ENCODE measurements at regions of chr2 and their contacts with region 1.

Region 1: DNA sequence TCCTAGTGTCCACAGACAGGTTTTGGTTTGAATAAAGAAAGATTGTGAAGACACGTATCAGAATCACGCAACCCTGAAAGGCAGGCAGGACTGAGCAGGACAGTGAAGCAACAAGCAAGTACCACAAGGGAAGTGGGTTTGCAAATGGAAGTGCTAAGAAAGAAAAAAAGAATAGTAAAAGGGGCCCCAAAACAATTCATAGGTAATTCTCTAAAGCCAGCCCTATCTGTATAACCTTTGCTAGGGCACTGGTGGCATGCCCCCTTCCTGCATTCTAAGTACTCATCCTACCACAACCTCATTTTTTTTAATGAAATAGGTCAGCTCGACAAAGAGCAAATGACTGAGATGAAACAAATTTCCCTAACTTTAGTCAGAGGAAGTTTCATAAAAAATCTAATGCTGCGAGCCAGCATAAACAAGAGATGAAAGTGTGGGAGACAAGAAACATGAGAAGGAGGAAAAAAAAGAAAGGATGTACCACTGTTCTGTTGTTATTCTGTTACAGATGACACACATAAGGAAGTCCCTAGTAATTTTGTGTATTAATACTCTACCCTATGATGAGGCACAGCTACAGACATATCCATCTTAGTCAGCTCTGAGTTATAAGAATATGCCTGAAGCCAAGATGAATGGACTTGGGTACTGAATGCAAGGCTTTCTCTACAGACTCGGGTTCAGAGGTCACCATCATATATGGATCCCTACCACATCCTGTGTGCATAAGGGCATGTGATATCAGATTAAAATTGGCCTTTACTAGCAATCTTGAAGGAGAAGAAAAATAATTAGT is 32.2 kb downstream of the IKZF2 start:
- DNase-seq: peak in 4 of 9 experiments; percentile 28 to 70 (median 57)
- ATAC-seq: peak; percentile 79
- H3K4me3 ChIP-seq: no peak overlapping the region
- H3K4me3 Mint-ChIP-seq: peak overlapping the region; percentile 53
- H3K27ac ChIP-seq: peak overlapping the region in 1 of 2 experiments; percentile 59
- H3K27ac Mint-ChIP-seq: peak overlapping the region; percentile 91
- H3K4me1 ChIP-seq: peaks cover 28% of the 10 kb centered on the region
- H3K4me1 Mint-ChIP-seq: peaks cover 65% of the 10 kb centered on the region
- H3K27me3 ChIP-seq: no peaks in the 10 kb centered on the region
- H3K27me3 Mint-ChIP-seq: no peaks in the 10 kb centered on the region
- CTCF ChIP-seq: no peak

Region 2: DNA sequence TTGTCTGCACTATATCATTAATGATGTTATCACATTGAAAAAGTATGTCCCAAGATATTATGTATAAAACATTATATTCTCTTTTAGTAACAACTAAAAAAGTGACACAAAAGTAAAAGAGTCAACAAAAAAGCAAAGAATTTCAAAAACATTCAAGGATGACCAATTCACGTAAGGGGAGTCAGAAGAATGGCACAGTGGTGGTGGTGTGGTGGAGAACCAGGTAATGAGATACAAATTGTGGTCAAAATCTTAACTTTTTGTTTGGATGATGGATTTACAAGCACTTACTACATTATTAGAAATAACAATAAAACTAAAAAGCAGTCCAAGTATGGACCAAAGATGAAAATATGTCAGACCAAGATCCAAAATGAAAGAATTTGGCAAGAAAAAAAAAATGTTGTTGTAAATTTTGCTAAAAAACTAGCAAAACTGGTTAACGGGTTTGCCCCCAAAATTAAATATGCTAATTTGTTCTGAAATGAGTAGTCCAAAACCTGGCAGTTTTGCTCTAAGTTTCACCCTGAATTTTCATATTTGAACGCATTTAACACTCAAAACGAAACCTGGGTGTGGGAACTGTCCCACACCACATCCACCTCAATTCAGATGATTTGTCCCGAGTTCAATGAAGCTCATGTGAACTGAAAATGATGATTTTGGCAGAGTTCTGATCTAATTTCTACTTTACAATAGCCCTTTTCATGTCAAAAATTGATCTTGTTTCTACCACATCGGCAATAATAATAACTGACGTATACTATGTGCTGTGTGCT is 103.7 kb before region 1 on chr2:
- CTCF ChIA-PET with region 1: no interaction called
- POLR2A ChIA-PET with region 1: no interaction called
- intact Hi-C with region 1: loop called in 1 of 2 experiments (anchors 5 kb)
- DNase-seq: peak in 2 of 9 experiments; percentile 43 to 52
- ATAC-seq: peak; percentile 49
- H3K4me3 ChIP-seq: no peak overlapping the region
- H3K4me3 Mint-ChIP-seq: peak overlapping the region; percentile 5
- H3K27ac ChIP-seq: no peak overlapping the region
- H3K27ac Mint-ChIP-seq: peak overlapping the region; percentile 20
- H3K4me1 ChIP-seq: no peaks in the 10 kb centered on the region
- H3K4me1 Mint-ChIP-seq: peaks cover 21% of the 10 kb centered on the region
- H3K27me3 ChIP-seq: no peaks in the 10 kb centered on the region
- H3K27me3 Mint-ChIP-seq: no peaks in the 10 kb centered on the region
- CTCF ChIP-seq: no peak

Region 3: GRCh38 chr2:213065583-213066442 is 53.4 kb before region 1 on chr2:
- CTCF ChIA-PET with region 1: no interaction called
- POLR2A ChIA-PET with region 1: no interaction called
- intact Hi-C with region 1: loop called in 1 of 2 experiments (anchors 10 kb)
- DNase-seq: peak in 5 of 9 experiments; percentile 8 to 50 (median 26)
- ATAC-seq: peak; percentile 87
- H3K4me3 ChIP-seq: peak overlapping the region; percentile 10 to 17
- H3K4me3 Mint-ChIP-seq: peak overlapping the region; percentile 83
- H3K27ac ChIP-seq: peak overlapping the region in 1 of 2 experiments; percentile 5
- H3K27ac Mint-ChIP-seq: peak overlapping the region; percentile 89
- H3K4me1 ChIP-seq: peaks cover 4% of the 10 kb centered on the region
- H3K4me1 Mint-ChIP-seq: peaks cover 62% of the 10 kb centered on the region
- H3K27me3 ChIP-seq: no peaks in the 10 kb centered on the region
- H3K27me3 Mint-ChIP-seq: no peaks in the 10 kb centered on the region
- CTCF ChIP-seq: no peak

Region 4: DNA sequence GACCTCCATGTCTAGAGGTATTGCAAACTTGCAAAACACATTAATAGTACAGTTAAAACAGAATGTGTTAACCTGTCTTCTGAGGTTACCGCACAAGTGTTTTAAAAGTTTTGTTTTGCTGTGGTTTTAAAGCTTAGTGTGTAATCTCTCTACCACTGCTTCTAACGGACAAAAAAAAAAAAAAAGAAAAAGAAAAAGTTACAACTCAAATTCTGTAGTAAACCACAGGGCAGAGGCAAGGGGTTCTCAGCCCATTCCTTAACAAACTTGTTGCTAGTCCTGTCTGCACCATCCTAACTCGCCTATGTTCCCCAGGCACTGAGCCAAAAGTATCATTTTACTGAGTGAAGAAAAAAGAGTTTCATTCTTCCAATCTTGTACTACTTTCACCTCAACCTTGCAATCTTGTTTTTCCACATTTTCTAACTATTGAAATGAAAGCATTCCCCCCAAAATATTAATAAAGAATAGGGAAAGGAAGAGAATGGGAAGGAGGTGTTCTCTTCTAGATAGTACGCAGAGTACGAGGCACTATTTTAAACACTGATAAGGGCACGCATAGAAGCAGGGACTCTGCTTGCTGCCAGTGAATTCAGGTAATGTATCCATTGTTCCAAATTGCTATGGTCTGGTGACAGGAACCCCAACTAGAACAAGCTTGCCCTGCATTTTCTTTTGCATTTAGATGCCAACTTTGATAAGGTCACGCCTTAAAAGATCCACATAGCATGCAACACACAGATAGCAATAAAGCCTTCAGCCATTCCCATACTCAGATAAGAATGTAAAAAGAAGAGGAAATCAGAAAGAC is 15.0 kb before region 1 on chr2:
- CTCF ChIA-PET with region 1: interaction called, 3 read pairs
- POLR2A ChIA-PET with region 1: interaction called, 3 read pairs
- intact Hi-C with region 1: loop called in 1 of 2 experiments (anchors 2 kb)
- DNase-seq: peak in 2 of 9 experiments; percentile 45 to 64
- ATAC-seq: peak; percentile 73
- H3K4me3 ChIP-seq: peak overlapping the region in 1 of 2 experiments; percentile 29
- H3K4me3 Mint-ChIP-seq: peak overlapping the region; percentile 75
- H3K27ac ChIP-seq: peak overlapping the region in 1 of 2 experiments; percentile 46
- H3K27ac Mint-ChIP-seq: peak overlapping the region; percentile 78
- H3K4me1 ChIP-seq: peaks cover 19% of the 10 kb centered on the region
- H3K4me1 Mint-ChIP-seq: peaks cover 73% of the 10 kb centered on the region
- H3K27me3 ChIP-seq: no peaks in the 10 kb centered on the region
- H3K27me3 Mint-ChIP-seq: no peaks in the 10 kb centered on the region
- CTCF ChIP-seq: no peak

Region 5: DNA sequence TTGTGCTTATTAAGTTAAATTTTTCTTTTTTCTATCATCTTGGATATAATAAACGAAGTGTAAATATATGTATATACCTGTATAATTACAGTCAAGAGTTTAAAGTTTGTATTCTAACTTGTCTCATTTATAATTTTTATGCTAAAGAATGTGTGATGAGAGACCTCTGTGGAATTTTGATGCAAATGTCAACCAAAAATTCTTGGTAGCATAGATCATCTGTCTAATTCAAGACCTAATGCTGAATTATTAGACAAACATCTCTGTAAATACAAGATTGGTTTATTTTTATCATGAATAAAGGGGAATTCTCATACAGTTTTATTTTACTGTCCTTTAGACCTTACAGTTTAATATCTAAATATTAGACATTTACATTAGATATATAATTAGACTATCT is 1142.4 kb after region 1 on chr2:
- CTCF ChIA-PET with region 1: no interaction called
- POLR2A ChIA-PET with region 1: no interaction called
- intact Hi-C with region 1: no loop called
- DNase-seq: no peak
- ATAC-seq: no peak
- H3K4me3 ChIP-seq: no peak overlapping the region
- H3K4me3 Mint-ChIP-seq: no peak overlapping the region
- H3K27ac ChIP-seq: no peak overlapping the region
- H3K27ac Mint-ChIP-seq: no peak overlapping the region
- H3K4me1 ChIP-seq: no peaks in the 10 kb centered on the region
- H3K4me1 Mint-ChIP-seq: no peaks in the 10 kb centered on the region
- H3K27me3 ChIP-seq: no peaks in the 10 kb centered on the region
- H3K27me3 Mint-ChIP-seq: no peaks in the 10 kb centered on the region
- CTCF ChIP-seq: no peak

Measured in CD8-positive, alpha-beta T cell (primary cell).